Breast epithelium (tissue), 4 donors: ENCODE measurements at regions of chr2 and their contacts with region 1.

Region 1: DNA sequence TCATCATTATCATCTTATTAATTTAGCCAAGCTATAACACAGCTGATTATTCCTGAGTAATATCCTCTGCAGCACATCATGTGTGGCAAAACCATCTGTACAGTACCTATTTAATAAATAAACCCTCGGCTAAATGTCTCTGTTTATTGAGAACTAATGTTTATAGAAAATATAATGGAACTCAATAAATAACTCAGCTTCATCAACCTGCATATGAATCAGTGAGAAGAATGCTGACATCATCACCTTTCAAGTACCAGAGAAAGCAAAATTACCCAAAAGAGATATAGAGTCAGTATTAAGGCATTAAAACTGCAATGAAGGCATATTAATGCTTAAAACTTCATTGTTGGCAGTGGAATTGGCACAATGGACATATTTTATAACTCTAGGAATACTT is 558.3 kb downstream of the PLCL1 start:
- DNase-seq: no peak
- H3K4me3 ChIP-seq: no peak overlapping the region
- H3K27ac ChIP-seq: no peak overlapping the region
- H3K4me1 ChIP-seq: no peaks in the 10 kb centered on the region
- H3K27me3 ChIP-seq: no peaks in the 10 kb centered on the region
- CTCF ChIP-seq: no peak
- POLR2A ChIP-seq: no peak

Region 2: DNA sequence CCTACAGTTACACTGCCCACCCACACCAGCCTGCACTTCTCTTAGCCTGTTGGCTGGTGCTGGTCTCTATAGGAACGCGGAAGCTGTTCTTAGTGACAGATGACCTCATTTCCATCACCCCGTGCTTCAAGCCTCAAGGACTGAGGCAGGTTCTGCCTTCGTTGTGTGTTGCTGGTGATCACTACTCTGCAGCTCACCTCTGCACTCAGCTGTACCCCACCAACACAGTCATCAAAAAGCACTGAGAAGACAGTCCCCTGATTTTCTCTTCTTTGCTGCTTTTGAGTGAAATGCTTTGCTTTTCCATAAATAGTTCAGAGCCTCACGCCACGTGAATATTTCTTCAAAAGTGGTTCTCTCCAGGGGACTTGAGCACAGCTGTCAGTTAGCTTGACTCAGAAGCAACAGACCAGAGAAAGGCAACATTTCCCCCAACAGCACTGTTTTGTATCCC is 1948.9 kb before region 1 on chr2:
- intact Hi-C with region 1: loop called (anchors 10 kb)
- DNase-seq: no peak
- H3K4me3 ChIP-seq: no peak overlapping the region
- H3K27ac ChIP-seq: no peak overlapping the region
- H3K4me1 ChIP-seq: no peaks in the 10 kb centered on the region
- H3K27me3 ChIP-seq: no peaks in the 10 kb centered on the region
- CTCF ChIP-seq: no peak
- POLR2A ChIP-seq: no peak

Region 3: DNA sequence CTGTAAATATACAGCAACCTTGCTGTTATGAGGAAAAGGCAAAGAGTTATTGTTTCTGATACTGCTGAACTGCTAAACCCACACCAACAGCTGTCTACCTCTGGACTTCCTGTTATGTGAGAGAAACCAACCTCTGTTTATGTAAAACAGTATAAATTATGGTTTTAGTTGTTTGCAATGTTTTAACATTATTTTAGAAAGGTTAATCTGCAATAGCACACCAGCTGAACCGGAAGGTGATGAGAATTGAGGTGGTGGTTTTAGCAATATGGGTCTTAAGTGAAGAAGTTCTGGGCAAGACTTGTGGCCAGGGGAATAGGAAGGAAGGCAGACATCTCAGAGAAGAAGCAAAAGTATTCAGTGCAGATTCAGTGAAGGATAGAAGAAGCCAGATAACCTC is 320.6 kb before region 1 on chr2:
- intact Hi-C with region 1: no loop called
- DNase-seq: no peak
- H3K4me3 ChIP-seq: no peak overlapping the region
- H3K27ac ChIP-seq: no peak overlapping the region
- H3K4me1 ChIP-seq: no peaks in the 10 kb centered on the region
- H3K27me3 ChIP-seq: no peaks in the 10 kb centered on the region
- CTCF ChIP-seq: no peak
- POLR2A ChIP-seq: no peak

Region 4: DNA sequence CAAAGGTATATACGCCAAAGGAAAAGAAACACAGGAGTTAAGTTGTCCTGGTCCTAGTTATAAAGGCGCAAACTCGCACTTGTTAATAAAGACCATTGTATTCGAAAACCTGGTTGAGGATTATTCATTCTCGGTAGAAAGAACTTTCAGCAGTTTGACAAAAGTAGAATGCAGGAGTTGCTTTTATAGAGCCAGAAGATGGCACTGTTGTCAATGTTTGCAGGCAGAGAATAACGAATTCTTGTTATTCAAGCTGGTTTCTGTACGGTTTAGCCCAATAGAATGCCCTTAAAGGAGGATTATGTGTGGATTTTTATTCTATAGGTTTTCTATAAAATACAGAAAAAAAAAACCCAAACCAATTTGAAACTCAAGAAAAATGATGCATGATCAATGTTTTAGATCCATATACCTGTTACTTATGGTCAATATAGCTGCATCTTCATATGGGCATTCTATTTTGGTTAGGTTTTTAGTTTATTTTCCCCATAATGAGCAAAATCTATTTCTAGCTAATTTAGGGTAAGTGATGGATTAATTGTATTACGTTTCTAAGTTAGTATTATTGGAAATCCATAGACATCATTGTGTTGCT is 48.1 kb before region 1 on chr2:
- intact Hi-C with region 1: no loop called
- DNase-seq: no peak
- H3K4me3 ChIP-seq: no peak overlapping the region
- H3K27ac ChIP-seq: no peak overlapping the region
- H3K4me1 ChIP-seq: no peaks in the 10 kb centered on the region
- H3K27me3 ChIP-seq: peaks cover 0 to 14% of the 10 kb centered on the region in 2 donors
- CTCF ChIP-seq: peak in 2 of 3 donors; percentile 24 to 53
- POLR2A ChIP-seq: no peak